ENCODE measurements at regions of chr1 and their contacts with region 1.

Region 1: GRCh38 chr1:25796811-25797458 is 3.1 kb upstream of the SELENON start:
- DNase-seq: peak; percentile 77
- ATAC-seq: peak; percentile 27; the same call in 1 of the 2 replicates
- H3K4me3 ChIP-seq: no peak overlapping the region
- H3K27ac ChIP-seq: no peak overlapping the region
- H3K4me1 ChIP-seq: peaks cover 12% of the 10 kb centered on the region
- H3K27me3 ChIP-seq: no peaks in the 10 kb centered on the region
- CTCF ChIP-seq: peak; percentile 92
- POLR2A ChIP-seq: no peak
- RAD21 ChIP-seq: peak; percentile 90

Region 2: GRCh38 chr1:25608488-25609178 is 188.3 kb before region 1 on chr1:
- CTCF ChIA-PET with region 1: interaction called, 7 read pairs
- POLR2A ChIA-PET with region 1: no interaction called
- dilution Hi-C with region 1: no loop called
- in situ Hi-C with region 1: loop called (anchors 5 kb)
- intact Hi-C with region 1: loop called (anchors 1 kb)
- DNase-seq: peak; percentile 64
- ATAC-seq: peak; percentile 82
- H3K4me3 ChIP-seq: no peak overlapping the region
- H3K27ac ChIP-seq: no peak overlapping the region
- H3K4me1 ChIP-seq: no peaks in the 10 kb centered on the region
- H3K27me3 ChIP-seq: peaks cover 20% of the 10 kb centered on the region
- CTCF ChIP-seq: peak; percentile 65
- POLR2A ChIP-seq: no peak
- RAD21 ChIP-seq: peak; percentile 81

Region 3: GRCh38 chr1:25711555-25712298 is 85.2 kb before region 1 on chr1:
- CTCF ChIA-PET with region 1: no interaction called
- POLR2A ChIA-PET with region 1: no interaction called
- dilution Hi-C with region 1: no loop called
- in situ Hi-C with region 1: no loop called
- intact Hi-C with region 1: loop called (anchors 5 kb)
- DNase-seq: peak; percentile 92
- ATAC-seq: peak; percentile 82
- H3K4me3 ChIP-seq: no peak overlapping the region
- H3K27ac ChIP-seq: peak overlapping the region; percentile 100
- H3K4me1 ChIP-seq: peaks cover 60% of the 10 kb centered on the region
- H3K27me3 ChIP-seq: no peaks in the 10 kb centered on the region
- CTCF ChIP-seq: no peak
- POLR2A ChIP-seq: no peak
- RAD21 ChIP-seq: peak; percentile 14; the same call in 1 of the 2 replicates